ENCODE measurements at regions of chr10 and their contacts with region 1.

Region 1: DNA sequence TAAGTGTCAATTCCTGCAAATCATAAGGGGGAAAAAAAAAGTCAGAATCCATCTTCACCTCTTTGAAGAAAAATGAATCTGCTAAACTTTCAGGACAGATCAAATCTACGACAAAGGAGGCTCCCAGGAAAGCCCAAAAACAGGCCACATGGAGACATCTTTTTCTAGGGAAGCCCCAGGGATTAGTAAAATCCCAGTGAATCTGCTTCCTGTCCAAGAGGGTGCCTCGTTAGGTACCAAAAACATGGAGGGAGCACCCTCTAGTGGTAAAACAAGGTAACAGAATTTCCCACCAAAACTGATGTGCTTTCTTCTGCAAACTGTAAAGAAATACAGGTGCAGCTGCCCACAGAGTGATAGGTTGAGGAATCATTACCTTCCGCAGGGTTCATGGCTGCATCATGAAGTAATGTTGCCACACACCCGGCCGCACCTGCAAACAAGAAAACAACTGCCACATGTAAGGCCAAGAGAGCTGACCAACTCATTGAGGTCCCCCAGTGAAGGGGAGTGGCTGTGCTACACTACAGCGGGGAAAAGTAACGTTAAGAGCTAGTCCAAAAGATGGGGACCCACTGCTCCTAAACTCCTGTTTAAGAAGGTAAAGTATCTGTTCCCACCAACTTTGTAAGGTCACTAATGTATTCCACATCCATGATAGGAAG is 7.9 kb downstream of the SLC25A28 start:
- DNase-seq: peak; percentile 49 to 60 (median 50)
- H3K4me3 ChIP-seq: no peak overlapping the region
- H3K27ac ChIP-seq: no peak overlapping the region
- H3K4me1 ChIP-seq: peaks cover 18 to 74% (median 44%) of the 10 kb centered on the region in 4 experiments
- H3K27me3 ChIP-seq: no peaks in the 10 kb centered on the region

Region 2: DNA sequence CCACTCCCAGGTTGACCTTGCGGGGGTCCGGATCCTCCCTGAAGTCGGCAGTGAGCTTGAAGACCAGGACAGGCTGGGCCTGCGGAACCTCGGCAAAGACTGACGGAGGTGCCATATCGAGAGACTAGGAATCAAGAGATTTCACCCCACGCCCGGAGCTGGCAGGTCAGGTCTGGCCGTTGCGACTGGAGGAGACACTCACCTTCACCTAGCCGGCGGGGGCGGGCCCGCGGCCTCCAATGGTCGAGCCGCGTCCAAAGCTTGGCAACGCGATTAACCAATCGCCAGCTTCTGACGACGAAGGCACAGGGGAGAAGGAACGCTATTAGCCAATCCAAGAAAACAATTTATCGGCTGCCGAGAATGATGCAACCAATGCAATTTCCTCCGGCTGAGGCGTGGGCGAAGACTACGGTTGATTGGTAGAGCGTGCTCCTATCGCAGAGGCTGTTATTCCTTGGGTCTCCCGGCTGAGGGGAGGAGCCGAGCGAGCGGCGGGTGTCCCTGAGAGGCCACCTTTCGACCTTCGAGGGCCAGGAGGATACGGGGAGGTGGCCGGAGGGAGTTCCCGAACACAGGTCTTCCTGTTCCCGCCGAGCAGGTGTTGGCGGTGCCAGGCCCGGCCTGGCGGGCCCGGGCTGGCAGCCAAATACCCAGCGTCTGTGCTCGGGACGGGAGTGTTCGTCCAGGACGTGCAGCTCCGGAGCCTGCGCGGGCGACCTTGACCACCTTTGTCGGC is 181.7 kb before region 1 on chr10 and contains the start of gene GOT1:
- CTCF ChIA-PET with region 1: interaction called, 129 read pairs
- POLR2A ChIA-PET with region 1: interaction called, 3 read pairs
- DNase-seq: peak; percentile 98 to 99 (median 99)
- H3K4me3 ChIP-seq: peak within 1 kb of the TSS; percentile 75 to 96 (median 93)
- H3K27ac ChIP-seq: peak within 1 kb of the TSS; percentile 71 to 92
- H3K4me1 ChIP-seq: peaks cover 0 to 24% (median 18%) of the 10 kb centered on the region in 4 experiments
- H3K27me3 ChIP-seq: no peaks in the 10 kb centered on the region

Region 3: GRCh38 chr10:99484603-99485581 is 127.4 kb before region 1 on chr10:
- CTCF ChIA-PET with region 1: interaction called, 32 read pairs
- POLR2A ChIA-PET with region 1: no interaction called
- DNase-seq: peak in 2 of 3 donors; percentile 17 to 21
- H3K4me3 ChIP-seq: no peak overlapping the region
- H3K27ac ChIP-seq: no peak overlapping the region
- H3K4me1 ChIP-seq: peaks cover 0 to 11% (median 2%) of the 10 kb centered on the region in 4 experiments
- H3K27me3 ChIP-seq: no peaks in the 10 kb centered on the region

Region 4: GRCh38 chr10:99560277-99561126 is 51.8 kb before region 1 on chr10:
- CTCF ChIA-PET with region 1: interaction called, 147 read pairs
- POLR2A ChIA-PET with region 1: no interaction called
- DNase-seq: peak in 2 of 3 donors; percentile 42 to 51
- H3K4me3 ChIP-seq: no peak overlapping the region
- H3K27ac ChIP-seq: no peak overlapping the region
- H3K4me1 ChIP-seq: peaks cover 0 to 7% (median under 1%) of the 10 kb centered on the region in 4 experiments
- H3K27me3 ChIP-seq: no peaks in the 10 kb centered on the region

Region 5: GRCh38 chr10:99648717-99649116 is 36.4 kb after region 1 on chr10:
- CTCF ChIA-PET with region 1: no interaction called
- POLR2A ChIA-PET with region 1: no interaction called
- DNase-seq: peak in 1 of 3 donors; percentile 37
- H3K4me3 ChIP-seq: no peak overlapping the region
- H3K27ac ChIP-seq: no peak overlapping the region
- H3K4me1 ChIP-seq: no peaks in the 10 kb centered on the region
- H3K27me3 ChIP-seq: no peaks in the 10 kb centered on the region

Region 6: DNA sequence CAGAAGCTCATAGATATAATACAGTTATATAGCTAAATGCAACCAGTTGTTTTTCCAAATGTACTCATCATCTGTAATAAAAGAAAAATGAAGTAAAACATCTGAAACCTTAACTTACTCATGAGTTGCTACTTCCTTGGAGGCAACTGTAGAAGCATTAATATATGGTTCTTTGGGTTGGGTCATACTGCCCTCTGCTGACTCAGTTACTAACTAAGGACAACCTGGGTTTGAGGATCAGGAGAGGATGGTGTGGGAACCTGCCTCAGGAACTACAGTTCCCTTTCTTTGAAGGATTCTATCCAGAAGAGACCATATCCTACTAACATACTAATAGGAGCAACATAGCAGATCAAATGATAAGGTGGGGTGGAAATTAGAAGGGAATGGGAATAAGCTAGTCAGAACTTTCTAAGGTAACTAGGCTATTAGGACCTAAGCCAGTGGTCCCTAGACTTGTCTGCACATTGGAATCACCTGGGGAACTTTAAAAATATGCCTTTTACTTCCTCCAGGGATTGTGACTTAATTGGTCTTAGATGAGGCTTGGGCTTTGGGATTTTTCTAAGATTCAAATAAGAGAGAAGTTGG is 98.9 kb after region 1 on chr10:
- CTCF ChIA-PET with region 1: interaction called, 20 read pairs
- POLR2A ChIA-PET with region 1: no interaction called
- DNase-seq: peak; percentile 80 to 92 (median 87)
- H3K4me3 ChIP-seq: no peak overlapping the region
- H3K27ac ChIP-seq: no peak overlapping the region
- H3K4me1 ChIP-seq: peaks cover 0 to 21% (median 11%) of the 10 kb centered on the region in 4 experiments
- H3K27me3 ChIP-seq: no peaks in the 10 kb centered on the region

Measured in common myeloid progenitor, CD34-positive (primary cell).